CD8-positive, alpha-beta T cell (primary cell): ENCODE measurements at regions of chr6 and their contacts with region 1.

Region 1: GRCh38 chr6:107361753-107362604 is 97.4 kb downstream of the PDSS2 start:
- DNase-seq: no peak
- ATAC-seq: no peak
- H3K4me3 ChIP-seq: no peak overlapping the region
- H3K4me3 Mint-ChIP-seq: no peak overlapping the region
- H3K27ac ChIP-seq: no peak overlapping the region
- H3K27ac Mint-ChIP-seq: no peak overlapping the region
- H3K4me1 ChIP-seq: no peaks in the 10 kb centered on the region
- H3K4me1 Mint-ChIP-seq: peaks cover 5% of the 10 kb centered on the region
- H3K27me3 ChIP-seq: no peaks in the 10 kb centered on the region
- H3K27me3 Mint-ChIP-seq: no peaks in the 10 kb centered on the region
- CTCF ChIP-seq: no peak

Region 2: DNA sequence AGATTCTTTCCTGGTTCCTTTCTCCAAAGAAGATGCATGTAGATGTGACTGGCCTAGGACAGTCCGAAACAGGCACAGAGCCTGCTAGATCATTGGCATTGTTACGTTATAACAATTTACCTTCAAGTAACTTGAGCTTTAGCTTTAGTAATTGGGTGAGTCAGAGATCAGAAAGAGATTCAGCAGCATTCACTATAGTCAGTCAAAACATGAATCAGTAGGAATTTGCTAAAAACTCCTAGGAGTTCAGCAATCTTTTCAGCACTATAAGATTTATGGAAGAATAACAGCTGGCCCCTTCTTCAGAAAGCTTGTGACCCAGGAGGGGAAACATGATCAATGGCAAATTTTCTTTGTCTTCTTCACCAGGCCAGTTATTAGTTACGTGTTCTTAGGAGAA is 1557.5 kb before region 1 on chr6:
- CTCF ChIA-PET with region 1: no interaction called
- POLR2A ChIA-PET with region 1: no interaction called
- intact Hi-C with region 1: loop called in 1 of 2 experiments (anchors 10 kb)
- DNase-seq: no peak
- ATAC-seq: no peak
- H3K4me3 ChIP-seq: no peak overlapping the region
- H3K4me3 Mint-ChIP-seq: no peak overlapping the region
- H3K27ac ChIP-seq: no peak overlapping the region
- H3K27ac Mint-ChIP-seq: no peak overlapping the region
- H3K4me1 ChIP-seq: no peaks in the 10 kb centered on the region
- H3K4me1 Mint-ChIP-seq: peaks cover 7% of the 10 kb centered on the region
- H3K27me3 ChIP-seq: no peaks in the 10 kb centered on the region
- H3K27me3 Mint-ChIP-seq: no peaks in the 10 kb centered on the region
- CTCF ChIP-seq: no peak